GM12878 (cell line): ENCODE measurements at regions of chr2 and their contacts with region 1.

Region 1: DNA sequence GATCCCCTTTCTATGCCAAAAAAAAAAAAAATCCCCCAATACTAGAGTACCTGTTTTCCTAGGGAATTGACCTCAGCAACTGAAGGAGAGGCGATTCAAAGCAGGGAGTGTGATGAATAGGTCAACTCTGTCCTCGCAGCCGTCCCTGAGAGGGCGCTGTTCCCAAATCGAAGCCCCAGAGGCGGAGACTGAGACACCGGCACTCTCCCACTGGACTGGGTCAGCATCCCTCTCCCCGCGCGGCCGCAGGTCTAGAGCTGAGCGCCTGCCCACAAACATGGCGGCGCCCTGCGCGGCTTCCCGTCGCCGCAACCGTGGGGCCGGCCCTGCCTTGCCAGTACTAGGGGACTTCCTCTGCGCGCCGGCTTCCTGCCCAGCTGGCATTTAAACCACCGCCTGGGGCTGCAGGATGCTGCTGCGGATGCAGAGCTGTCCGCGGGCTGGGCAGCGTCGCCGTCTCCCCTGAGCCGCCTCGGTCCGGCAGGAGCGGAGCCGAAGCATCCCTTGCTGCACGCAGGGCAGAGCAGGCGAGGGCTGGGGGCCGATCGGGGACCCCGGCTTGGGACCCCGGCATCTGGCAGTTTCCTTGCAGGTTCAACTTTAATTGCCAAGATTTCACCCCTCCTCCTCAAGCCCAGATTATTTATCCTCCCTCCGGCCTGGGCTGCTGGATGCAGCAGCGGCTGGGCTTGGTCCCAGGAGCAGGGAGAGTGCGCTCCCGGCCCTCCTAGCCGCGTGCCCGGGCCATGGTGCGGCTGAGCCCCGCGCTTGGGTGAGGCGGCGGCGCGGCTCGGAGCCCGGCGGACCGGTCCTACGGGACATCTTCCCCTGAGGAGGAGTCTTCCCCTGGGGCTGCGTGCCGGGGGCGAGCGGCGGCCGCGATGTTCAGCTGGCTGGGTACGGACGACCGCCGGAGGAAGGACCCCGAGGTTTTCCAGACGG is at the start of gene EHD3:
- DNase-seq: no peak
- ATAC-seq: peak; percentile 99
- H3K4me3 ChIP-seq: peak within 1 kb of the TSS; percentile 48
- H3K27ac ChIP-seq: no peak within 1 kb of the TSS
- H3K4me1 ChIP-seq: no peaks in the 10 kb centered on the region; the same call in 1 of the 2 replicates
- H3K27me3 ChIP-seq: no peaks in the 10 kb centered on the region
- CTCF ChIP-seq: peak; percentile 32 to 61 (median 59); a peak in 5 of 6 replicates
- EP300 ChIP-seq: no peak
- POLR2A ChIP-seq: peak; percentile 54; the same call in 1 of the 2 replicates
- RAD21 ChIP-seq: peak; percentile 48; the same call in 1 of the 2 replicates
- polyA plus RNA-seq, gene EHD3: 1.1 to 1.5 TPM

Region 2: GRCh38 chr2:31324000-31324633 is 90.1 kb after region 1 on chr2:
- CTCF ChIA-PET with region 1: interaction called, 11 read pairs
- POLR2A ChIA-PET with region 1: no interaction called
- RAD21 ChIA-PET with region 1: interaction called, 3 read pairs
- SMC1A ChIA-PET with region 1: interaction called, 5 read pairs
- in situ Hi-C with region 1: no loop called
- intact Hi-C with region 1: no loop called
- DNase-seq: peak; percentile 40
- ATAC-seq: peak; percentile 85
- H3K4me3 ChIP-seq: peak overlapping the region; percentile 17; the same call in 1 of the 2 replicates
- H3K27ac ChIP-seq: no peak overlapping the region
- H3K4me1 ChIP-seq: peaks cover 7% of the 10 kb centered on the region; the same call in 1 of the 2 replicates
- H3K27me3 ChIP-seq: no peaks in the 10 kb centered on the region
- CTCF ChIP-seq: no peak
- EP300 ChIP-seq: peak; percentile 36 to 39; a peak in 1 of 4 replicates
- POLR2A ChIP-seq: no peak
- RAD21 ChIP-seq: no peak